ENCODE measurements at regions of chr3 and their contacts with region 1.

Region 1: DNA sequence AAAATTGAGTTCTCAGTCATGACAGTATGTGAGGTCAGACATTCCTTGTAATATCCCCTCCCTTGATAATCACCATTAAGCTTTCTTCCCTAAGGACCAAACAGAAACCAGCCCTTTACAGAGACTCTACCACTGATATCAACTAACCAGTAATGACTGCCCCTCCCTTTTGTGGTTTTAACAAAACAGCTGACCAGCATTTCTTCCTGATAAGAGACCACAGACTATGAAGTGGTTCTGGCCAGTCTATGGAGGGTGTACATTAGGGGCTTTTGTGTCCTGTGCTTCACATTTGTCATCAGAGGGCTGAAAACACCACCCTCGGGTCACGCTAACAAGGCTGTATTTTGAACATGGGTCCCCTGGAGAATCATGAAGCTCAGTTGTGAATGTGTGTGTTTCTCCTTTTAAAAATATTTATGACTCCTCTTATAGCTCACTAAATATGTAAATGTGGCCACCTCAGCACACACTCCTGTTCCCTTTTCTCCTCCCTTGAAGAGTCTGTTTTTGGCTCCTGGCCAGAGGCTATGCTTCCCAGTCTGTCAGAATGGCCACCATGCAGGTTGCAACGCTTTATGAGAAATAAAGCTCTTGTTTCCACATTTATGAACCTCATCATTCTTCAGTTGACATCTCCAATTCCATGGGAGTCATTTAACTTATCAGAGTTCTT is 239.3 kb downstream of the CPNE4 start:
- DNase-seq: peak in 5 of 7 donors; percentile 10 to 27 (median 18)
- H3K4me3 ChIP-seq: no peak overlapping the region
- H3K27ac ChIP-seq: no peak overlapping the region
- H3K4me1 ChIP-seq: no peaks in the 10 kb centered on the region
- H3K27me3 ChIP-seq: peaks cover 3% of the 10 kb centered on the region
- CTCF ChIP-seq: no peak
- POLR2A ChIP-seq: no peak

Region 2: DNA sequence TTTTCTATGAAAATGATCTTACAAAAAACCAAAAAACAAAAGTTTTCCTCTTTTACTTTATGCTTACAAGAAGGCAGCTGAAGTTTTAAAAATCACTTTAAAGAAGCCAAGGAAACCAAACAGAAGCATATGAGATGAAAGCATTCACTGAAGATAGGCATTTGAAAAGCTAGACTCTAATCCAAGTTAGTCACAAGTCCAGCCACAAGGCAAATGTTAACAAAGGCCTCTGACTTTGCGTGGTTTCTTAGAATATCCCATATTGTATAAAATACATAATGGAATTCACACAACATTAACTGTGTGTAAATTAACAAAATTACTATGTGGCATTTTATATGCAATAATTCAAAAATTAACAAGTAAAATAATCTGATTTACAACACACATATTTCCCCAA is 310.4 kb before region 1 on chr3:
- intact Hi-C with region 1: no loop called
- DNase-seq: no peak
- H3K4me3 ChIP-seq: no peak overlapping the region
- H3K27ac ChIP-seq: no peak overlapping the region
- H3K4me1 ChIP-seq: no peaks in the 10 kb centered on the region
- H3K27me3 ChIP-seq: no peaks in the 10 kb centered on the region
- CTCF ChIP-seq: no peak
- POLR2A ChIP-seq: no peak

Region 3: GRCh38 chr3:132029182-132029902 is 233.8 kb after region 1 on chr3:
- intact Hi-C with region 1: loop called in 1 of 2 experiments (anchors 2 kb)
- DNase-seq: peak; percentile 79 to 94 (median 86)
- H3K4me3 ChIP-seq: no peak overlapping the region
- H3K27ac ChIP-seq: no peak overlapping the region
- H3K4me1 ChIP-seq: no peaks in the 10 kb centered on the region
- H3K27me3 ChIP-seq: peaks cover 22% of the 10 kb centered on the region
- CTCF ChIP-seq: peak; percentile 60 to 85 (median 74)
- POLR2A ChIP-seq: no peak

Measured in adrenal gland (tissue), 19 donors.